Natural killer cell (primary cell): ENCODE measurements at regions of chr15 and their contacts with region 1.

Region 1: GRCh38 chr15:85044251-85044853 is 62.7 kb downstream of the PDE8A start:
- DNase-seq: peak in 1 of 2 donors; percentile 72
- ATAC-seq: peak in 2 of 3 donors; percentile 66 to 69
- H3K4me3 ChIP-seq: no peak overlapping the region
- H3K4me3 Mint-ChIP-seq: no peak overlapping the region
- H3K27ac ChIP-seq: no peak overlapping the region
- H3K27ac Mint-ChIP-seq: peak overlapping the region in 1 of 2 donors; percentile 72
- H3K4me1 ChIP-seq: no peaks in the 10 kb centered on the region
- H3K4me1 Mint-ChIP-seq: peaks cover 11 to 27% of the 10 kb centered on the region in 2 donors
- H3K27me3 ChIP-seq: no peaks in the 10 kb centered on the region
- H3K27me3 Mint-ChIP-seq: no peaks in the 10 kb centered on the region
- CTCF ChIP-seq: peak; percentile 59

Region 2: GRCh38 chr15:84588053-84588874 is 456.1 kb before region 1 on chr15:
- intact Hi-C with region 1: loop called (anchors 10 kb)
- DNase-seq: peak; percentile 71 to 92
- ATAC-seq: peak; percentile 100
- H3K4me3 ChIP-seq: no peak overlapping the region
- H3K4me3 Mint-ChIP-seq: peak overlapping the region; percentile 74
- H3K27ac ChIP-seq: no peak overlapping the region
- H3K27ac Mint-ChIP-seq: no peak overlapping the region
- H3K4me1 ChIP-seq: peaks cover 6% of the 10 kb centered on the region
- H3K4me1 Mint-ChIP-seq: peaks cover 0 to 12% of the 10 kb centered on the region in 2 donors
- H3K27me3 ChIP-seq: no peaks in the 10 kb centered on the region
- H3K27me3 Mint-ChIP-seq: peaks cover 0 to 11% of the 10 kb centered on the region in 2 donors
- CTCF ChIP-seq: peak; percentile 87

Region 3: DNA sequence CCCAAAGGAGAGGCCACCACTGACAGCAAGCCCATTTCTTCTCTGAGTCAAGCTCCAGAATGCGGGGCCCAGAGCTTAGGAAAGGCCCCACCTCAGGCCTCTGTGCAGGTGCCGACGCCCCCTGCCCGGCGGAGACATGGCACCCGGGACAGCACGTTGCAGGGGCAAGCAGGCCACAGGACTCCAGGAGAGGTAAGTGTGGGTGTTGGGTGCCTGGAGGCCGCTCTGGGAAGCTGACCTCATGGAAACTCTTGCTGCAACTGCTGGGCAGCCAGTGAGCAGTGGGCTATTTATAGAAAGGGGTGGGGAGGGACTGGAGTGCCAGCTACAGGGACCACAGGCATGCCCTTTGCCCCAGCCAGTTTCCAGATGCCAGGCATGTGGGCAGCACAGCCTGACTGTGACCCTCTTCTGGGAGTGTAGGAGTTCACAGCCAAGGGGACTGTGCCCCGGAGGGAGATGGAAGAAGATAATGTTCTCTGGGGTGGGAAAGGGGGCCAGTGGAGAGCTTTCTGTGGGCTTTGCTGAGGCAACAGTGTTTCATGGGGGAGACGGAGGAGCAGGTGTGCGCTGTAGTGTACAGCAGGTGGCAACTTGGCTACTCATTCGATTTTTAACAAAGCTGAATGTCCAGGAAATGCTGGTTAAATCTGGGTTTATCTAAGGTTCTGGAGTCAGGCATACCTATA is 203.5 kb before region 1 on chr15:
- intact Hi-C with region 1: loop called (anchors 10 kb)
- DNase-seq: no peak
- ATAC-seq: no peak
- H3K4me3 ChIP-seq: no peak overlapping the region
- H3K4me3 Mint-ChIP-seq: no peak overlapping the region
- H3K27ac ChIP-seq: no peak overlapping the region
- H3K27ac Mint-ChIP-seq: no peak overlapping the region
- H3K4me1 ChIP-seq: no peaks in the 10 kb centered on the region
- H3K4me1 Mint-ChIP-seq: peaks cover 0 to 3% of the 10 kb centered on the region in 2 donors
- H3K27me3 ChIP-seq: no peaks in the 10 kb centered on the region
- H3K27me3 Mint-ChIP-seq: no peaks in the 10 kb centered on the region
- CTCF ChIP-seq: no peak

Region 4: GRCh38 chr15:84955089-84955848 is 89.1 kb before region 1 on chr15:
- intact Hi-C with region 1: loop called (anchors 1 kb)
- DNase-seq: peak in 1 of 2 donors; percentile 67
- ATAC-seq: peak in 2 of 3 donors; percentile 40 to 62
- H3K4me3 ChIP-seq: no peak overlapping the region
- H3K4me3 Mint-ChIP-seq: no peak overlapping the region
- H3K27ac ChIP-seq: no peak overlapping the region
- H3K27ac Mint-ChIP-seq: no peak overlapping the region
- H3K4me1 ChIP-seq: no peaks in the 10 kb centered on the region
- H3K4me1 Mint-ChIP-seq: no peaks in the 10 kb centered on the region
- H3K27me3 ChIP-seq: no peaks in the 10 kb centered on the region
- H3K27me3 Mint-ChIP-seq: peaks cover 16 to 22% of the 10 kb centered on the region in 2 donors
- CTCF ChIP-seq: peak; percentile 58

Region 5: DNA sequence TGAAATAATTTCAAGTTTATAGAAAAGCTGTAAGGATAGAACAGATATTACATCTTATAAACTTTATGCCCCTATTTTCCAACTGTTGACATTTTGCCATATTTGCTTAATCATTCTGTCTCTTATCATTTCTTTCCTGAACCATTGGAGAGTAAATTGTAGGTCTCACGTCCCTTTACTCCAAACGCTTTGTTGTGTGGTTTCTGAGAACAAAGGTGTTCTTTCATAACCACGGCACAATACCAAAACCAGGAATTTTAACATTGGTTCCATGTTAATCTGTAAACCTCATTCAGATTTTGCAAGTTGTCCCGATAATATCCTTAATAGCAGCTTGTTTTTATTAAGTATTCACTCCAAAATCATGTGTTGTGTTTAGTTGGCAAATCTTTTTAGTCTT is 470.9 kb after region 1 on chr15:
- intact Hi-C with region 1: no loop called
- DNase-seq: no peak
- ATAC-seq: no peak
- H3K4me3 ChIP-seq: no peak overlapping the region
- H3K4me3 Mint-ChIP-seq: no peak overlapping the region
- H3K27ac ChIP-seq: no peak overlapping the region
- H3K27ac Mint-ChIP-seq: no peak overlapping the region
- H3K4me1 ChIP-seq: no peaks in the 10 kb centered on the region
- H3K4me1 Mint-ChIP-seq: peaks cover 20% of the 10 kb centered on the region in 2 donors
- H3K27me3 ChIP-seq: no peaks in the 10 kb centered on the region
- H3K27me3 Mint-ChIP-seq: no peaks in the 10 kb centered on the region
- CTCF ChIP-seq: no peak